Activated naive CD4-positive, alpha-beta T cell treated with anti-CD3 and anti-CD28 coated beads for 36 hours (primary cell): ENCODE measurements at regions of chr4 and their contacts with region 1.

Region 1: GRCh38 chr4:139099366-139099982 is 77.5 kb downstream of the ELF2 start:
- DNase-seq: peak; percentile 89
- H3K4me3 Mint-ChIP-seq: no peak overlapping the region
- H3K27ac Mint-ChIP-seq: no peak overlapping the region
- H3K4me1 Mint-ChIP-seq: no peaks in the 10 kb centered on the region
- H3K27me3 Mint-ChIP-seq: no peaks in the 10 kb centered on the region

Region 2: GRCh38 chr4:139229534-139230039 is 130.1 kb after region 1 on chr4:
- CTCF ChIA-PET with region 1: interaction called, 12 read pairs
- intact Hi-C with region 1: loop called (anchors 1 kb)
- DNase-seq: no peak
- H3K4me3 Mint-ChIP-seq: no peak overlapping the region
- H3K27ac Mint-ChIP-seq: no peak overlapping the region
- H3K4me1 Mint-ChIP-seq: no peaks in the 10 kb centered on the region
- H3K27me3 Mint-ChIP-seq: no peaks in the 10 kb centered on the region